ENCODE measurements at regions of chr2 and their contacts with region 1.

Region 1: GRCh38 chr2:147989809-147990403 is 30.6 kb downstream of the ORC4 start:
- DNase-seq: peak; percentile 55
- CTCF ChIP-seq: peak; percentile 37

Region 2: DNA sequence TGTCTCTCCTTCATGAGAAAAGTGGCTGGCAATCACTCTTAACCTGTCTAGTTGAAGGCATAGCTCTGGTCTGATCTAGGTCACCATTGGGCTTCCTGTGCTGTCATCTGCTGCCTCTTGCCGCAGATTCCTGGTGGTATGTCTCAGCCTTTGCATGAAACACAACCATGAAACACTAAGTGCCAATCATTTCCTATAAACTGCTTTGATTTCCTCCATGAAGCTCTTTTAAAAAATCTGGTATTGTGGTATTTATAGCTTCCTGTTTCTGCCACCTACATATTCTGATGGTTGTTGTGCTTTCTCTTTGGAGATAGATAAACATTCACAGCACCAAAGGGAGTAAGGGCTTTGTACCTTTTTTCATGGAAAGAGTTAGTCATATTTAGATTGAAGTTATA is 534.6 kb after region 1 on chr2:
- in situ Hi-C with region 1: loop called (anchors 10 kb)
- DNase-seq: no peak
- CTCF ChIP-seq: no peak

Region 3: DNA sequence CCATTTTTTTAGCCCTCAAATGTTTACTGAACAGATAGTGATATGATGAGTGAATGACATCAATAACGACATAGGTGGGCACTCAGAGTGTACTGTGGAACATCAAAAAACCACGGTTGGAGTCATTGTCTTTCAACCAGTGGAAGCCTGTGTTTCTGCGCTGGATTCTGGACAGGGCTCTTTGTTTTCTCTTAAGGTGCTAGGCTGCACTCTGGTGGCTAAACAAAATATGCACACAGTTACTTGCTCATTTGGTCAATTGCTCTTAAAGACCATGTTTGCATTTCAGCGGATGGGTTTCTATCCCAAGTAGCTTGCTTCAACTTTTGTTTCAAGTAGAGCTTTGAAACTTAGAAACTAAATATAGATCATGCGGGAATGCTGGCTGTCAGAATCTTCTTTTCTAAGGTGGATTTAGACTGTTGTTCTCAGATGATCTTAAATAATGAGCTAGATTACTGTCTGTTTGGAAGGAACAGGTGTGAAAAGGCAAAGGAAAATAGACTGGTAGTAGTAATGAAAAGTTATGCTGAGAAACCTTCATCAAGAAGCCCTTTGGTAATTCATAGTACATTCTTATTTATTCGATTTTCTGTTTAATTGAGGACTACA is 1000.1 kb after region 1 on chr2:
- in situ Hi-C with region 1: loop called (anchors 25 kb)
- DNase-seq: peak; percentile 72
- CTCF ChIP-seq: peak; percentile 61

Region 4: DNA sequence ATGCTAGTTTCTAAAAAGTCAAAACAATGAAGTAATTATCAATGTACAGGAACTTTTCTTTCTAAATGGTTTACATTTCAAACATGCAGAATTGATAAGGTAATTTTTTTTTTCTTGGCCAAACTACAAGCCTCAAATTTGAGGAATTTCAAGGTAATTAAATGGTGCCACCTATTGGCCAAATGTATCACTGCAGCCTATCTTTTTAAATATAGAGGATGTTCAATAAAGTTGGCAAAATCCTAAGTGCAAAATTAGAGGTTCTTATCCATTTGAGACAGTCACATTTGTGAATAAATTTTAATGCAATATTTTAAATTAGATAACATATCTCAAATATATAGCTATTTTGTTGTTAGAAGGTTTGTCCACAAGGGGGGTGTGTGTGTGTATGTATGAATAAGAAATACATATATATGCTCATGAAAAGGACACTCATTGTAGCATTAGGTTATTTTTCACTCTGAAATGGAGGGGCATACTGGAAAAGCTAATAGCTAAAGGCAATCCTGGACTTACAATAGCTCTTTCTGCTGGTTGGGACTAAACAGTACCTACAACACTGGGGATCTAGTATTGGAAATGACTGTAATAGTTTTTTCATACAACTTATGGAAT is 1571.5 kb after region 1 on chr2:
- in situ Hi-C with region 1: loop called (anchors 25 kb)
- DNase-seq: peak; percentile 42
- CTCF ChIP-seq: peak; percentile 72